ENCODE measurements at regions of chr20 and their contacts with region 1.

Region 1: DNA sequence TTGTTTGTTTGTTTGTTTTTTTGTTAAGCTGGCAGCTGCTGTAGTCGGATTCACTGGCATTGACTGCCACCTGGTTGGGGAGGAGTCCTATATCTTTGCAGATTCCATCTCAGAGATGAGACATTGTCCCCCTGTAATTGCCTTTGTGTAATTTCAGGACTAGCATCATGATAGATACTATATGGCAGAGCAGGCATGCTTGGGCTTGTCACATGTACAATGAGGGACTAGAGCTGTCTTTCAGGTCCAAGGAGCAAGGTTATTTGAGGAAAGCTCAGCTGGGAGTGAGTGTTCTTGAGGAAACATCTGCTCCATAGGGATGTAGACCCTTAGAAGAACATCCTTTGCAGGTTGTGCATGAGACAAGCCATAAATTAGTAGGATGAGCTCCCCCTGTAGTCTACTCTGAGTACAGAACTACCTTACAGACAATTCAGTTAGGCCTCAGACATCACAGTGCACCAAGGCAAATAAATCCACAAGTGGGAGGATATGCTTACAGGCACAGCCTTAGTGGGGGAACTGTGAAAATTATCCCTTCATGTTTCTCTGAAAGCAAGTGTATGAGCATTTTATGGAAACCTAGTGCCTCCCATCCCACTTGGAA is 62.1 kb downstream of the BMP2 start:
- DNase-seq: no peak
- ATAC-seq: peak; percentile 50

Region 2: DNA sequence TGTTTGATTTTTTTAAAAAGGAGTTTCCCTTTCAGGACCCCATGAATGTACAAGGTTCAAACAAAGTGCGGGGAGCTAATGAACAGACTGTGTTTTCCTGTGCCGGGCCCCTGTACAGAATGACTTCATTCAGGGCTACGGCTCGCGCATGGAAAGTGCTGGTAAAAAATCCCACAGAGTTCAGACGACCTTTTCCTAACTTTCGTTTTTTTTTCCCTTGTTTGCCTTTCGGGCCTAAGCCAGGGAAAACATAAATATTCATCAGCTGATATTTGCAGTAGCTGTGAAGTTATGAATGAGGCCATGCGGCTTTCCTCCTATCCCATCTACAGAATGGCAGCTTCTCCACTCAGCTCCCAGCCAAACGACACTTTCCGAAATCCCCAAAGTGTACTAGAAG is 1036.7 kb after region 1 on chr20:
- intact Hi-C with region 1: loop called in 1 of 2 experiments (anchors 10 kb)
- DNase-seq: no peak
- ATAC-seq: no peak